ENCODE measurements at regions of chr1 and their contacts with region 1.

Region 1: DNA sequence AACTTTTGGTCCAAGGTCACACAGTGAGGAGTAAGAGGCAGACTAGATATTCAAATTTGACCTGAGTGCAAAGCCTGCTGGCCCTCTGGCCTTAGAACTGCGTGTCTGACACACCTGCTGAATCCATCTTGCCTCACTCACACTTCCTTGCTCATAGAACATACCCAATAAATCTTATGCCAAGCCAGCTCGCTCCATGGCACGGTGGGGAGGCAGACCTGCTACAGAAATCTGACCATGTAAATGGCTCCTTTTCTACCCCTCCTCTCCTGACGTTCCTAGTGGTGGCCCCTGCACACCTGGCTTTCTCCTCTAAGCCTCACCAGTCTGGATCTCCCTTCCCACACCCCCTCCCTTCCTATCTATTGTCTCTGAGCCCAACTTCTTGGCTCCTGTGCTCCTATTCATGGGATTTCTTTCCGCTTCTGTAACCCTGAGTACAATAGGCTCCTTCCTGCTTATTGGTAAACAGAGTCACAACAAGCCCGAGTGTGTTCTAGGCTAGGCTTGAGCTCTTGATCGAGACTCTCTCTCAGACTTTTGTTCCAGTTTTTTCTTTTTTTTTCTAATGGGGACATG is 17.5 kb downstream of the OPTC start:
- DNase-seq: no peak
- ATAC-seq: no peak
- H3K4me3 Mint-ChIP-seq: no peak overlapping the region
- H3K27ac Mint-ChIP-seq: peak overlapping the region in 2 of 10 donors; percentile 52 to 83
- H3K4me1 Mint-ChIP-seq: peaks cover 17 to 33% (median 27%) of the 10 kb centered on the region in 4 donors
- H3K27me3 Mint-ChIP-seq: peaks cover 0 to 5% (median 0%) of the 10 kb centered on the region in 5 donors

Region 2: GRCh38 chr1:203381151-203381751 is 130.2 kb before region 1 on chr1:
- POLR2A ChIA-PET with region 1: no interaction called
- DNase-seq: no peak
- ATAC-seq: no peak
- H3K4me3 Mint-ChIP-seq: peak overlapping the region in 1 of 10 donors; percentile 41
- H3K27ac Mint-ChIP-seq: peak overlapping the region in 1 of 10 donors; percentile 64
- H3K4me1 Mint-ChIP-seq: peaks cover 0 to 23% (median 0%) of the 10 kb centered on the region in 4 donors
- H3K27me3 Mint-ChIP-seq: peaks cover 10 to 30% (median 15%) of the 10 kb centered on the region in 5 donors

Region 3: GRCh38 chr1:203638950-203639349 is 127.5 kb after region 1 on chr1:
- POLR2A ChIA-PET with region 1: interaction called, 14 read pairs
- DNase-seq: no peak
- ATAC-seq: no peak
- H3K4me3 Mint-ChIP-seq: peak overlapping the region in 5 of 10 donors; percentile 7 to 24 (median 16)
- H3K27ac Mint-ChIP-seq: peak overlapping the region in 6 of 10 donors; percentile 1 to 83 (median 62)
- H3K4me1 Mint-ChIP-seq: peaks cover 25 to 56% (median 45%) of the 10 kb centered on the region in 4 donors
- H3K27me3 Mint-ChIP-seq: no peaks in the 10 kb centered on the region

Measured in naive thymus-derived CD8-positive, alpha-beta T cell (primary cell).